MCF 10A (cell line): ENCODE measurements at regions of chr5 and their contacts with region 1.

Region 1: GRCh38 chr5:64207978-64208377 is 42.3 kb downstream of the RNF180 start:
- DNase-seq: peak; percentile 34
- H3K4me3 Mint-ChIP-seq: no peak overlapping the region
- H3K27ac Mint-ChIP-seq: no peak overlapping the region
- H3K4me1 Mint-ChIP-seq: peaks cover 24% of the 10 kb centered on the region
- H3K27me3 Mint-ChIP-seq: no peaks in the 10 kb centered on the region
- CTCF ChIP-seq: peak; percentile 43

Region 2: DNA sequence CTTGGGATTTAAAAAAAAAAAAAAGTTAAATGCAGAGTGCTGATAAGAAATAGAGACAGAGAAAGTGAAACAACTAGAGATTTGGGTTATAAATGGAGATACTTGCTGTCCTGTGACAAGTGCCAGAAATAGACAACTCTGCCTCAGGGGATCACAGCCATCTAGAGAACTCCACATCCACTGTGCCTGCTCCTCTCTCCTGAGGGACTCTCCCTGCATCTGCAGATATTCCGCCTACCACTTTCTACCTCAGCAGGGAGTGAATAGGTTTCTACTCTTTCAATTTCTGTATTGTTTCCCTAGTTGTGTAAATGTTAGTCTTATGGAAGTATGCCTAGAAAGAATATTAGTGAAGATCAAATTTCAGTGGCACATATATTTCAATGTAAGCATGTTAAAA is 552.9 kb before region 1 on chr5:
- CTCF ChIA-PET with region 1: no interaction called
- POLR2A ChIA-PET with region 1: no interaction called
- intact Hi-C with region 1: no loop called
- DNase-seq: no peak
- H3K4me3 Mint-ChIP-seq: no peak overlapping the region
- H3K27ac Mint-ChIP-seq: no peak overlapping the region
- H3K4me1 Mint-ChIP-seq: no peaks in the 10 kb centered on the region
- H3K27me3 Mint-ChIP-seq: no peaks in the 10 kb centered on the region
- CTCF ChIP-seq: no peak

Region 3: GRCh38 chr5:63963080-63963735 is 244.8 kb before region 1 on chr5:
- CTCF ChIA-PET with region 1: no interaction called
- POLR2A ChIA-PET with region 1: no interaction called
- intact Hi-C with region 1: loop called (anchors 1 kb)
- DNase-seq: peak; percentile 80
- H3K4me3 Mint-ChIP-seq: no peak overlapping the region
- H3K27ac Mint-ChIP-seq: no peak overlapping the region
- H3K4me1 Mint-ChIP-seq: peaks cover 4% of the 10 kb centered on the region
- H3K27me3 Mint-ChIP-seq: peaks cover 31% of the 10 kb centered on the region
- CTCF ChIP-seq: peak; percentile 67

Region 4: GRCh38 chr5:64074533-64074932 is 133.4 kb before region 1 on chr5:
- CTCF ChIA-PET with region 1: interaction called, 8 read pairs
- POLR2A ChIA-PET with region 1: no interaction called
- intact Hi-C with region 1: loop called (anchors 1 kb)
- DNase-seq: peak; percentile 53
- H3K4me3 Mint-ChIP-seq: no peak overlapping the region
- H3K27ac Mint-ChIP-seq: no peak overlapping the region
- H3K4me1 Mint-ChIP-seq: no peaks in the 10 kb centered on the region
- H3K27me3 Mint-ChIP-seq: peaks cover 15% of the 10 kb centered on the region
- CTCF ChIP-seq: peak; percentile 62